GM13977 (cell line): ENCODE measurements at regions of chr20 and their contacts with region 1.

Region 1: GRCh38 chr20:31508517-31509244 is 5.6 kb upstream of the HM13 start:
- DNase-seq: no peak
- CTCF ChIP-seq: no peak

Region 2: DNA sequence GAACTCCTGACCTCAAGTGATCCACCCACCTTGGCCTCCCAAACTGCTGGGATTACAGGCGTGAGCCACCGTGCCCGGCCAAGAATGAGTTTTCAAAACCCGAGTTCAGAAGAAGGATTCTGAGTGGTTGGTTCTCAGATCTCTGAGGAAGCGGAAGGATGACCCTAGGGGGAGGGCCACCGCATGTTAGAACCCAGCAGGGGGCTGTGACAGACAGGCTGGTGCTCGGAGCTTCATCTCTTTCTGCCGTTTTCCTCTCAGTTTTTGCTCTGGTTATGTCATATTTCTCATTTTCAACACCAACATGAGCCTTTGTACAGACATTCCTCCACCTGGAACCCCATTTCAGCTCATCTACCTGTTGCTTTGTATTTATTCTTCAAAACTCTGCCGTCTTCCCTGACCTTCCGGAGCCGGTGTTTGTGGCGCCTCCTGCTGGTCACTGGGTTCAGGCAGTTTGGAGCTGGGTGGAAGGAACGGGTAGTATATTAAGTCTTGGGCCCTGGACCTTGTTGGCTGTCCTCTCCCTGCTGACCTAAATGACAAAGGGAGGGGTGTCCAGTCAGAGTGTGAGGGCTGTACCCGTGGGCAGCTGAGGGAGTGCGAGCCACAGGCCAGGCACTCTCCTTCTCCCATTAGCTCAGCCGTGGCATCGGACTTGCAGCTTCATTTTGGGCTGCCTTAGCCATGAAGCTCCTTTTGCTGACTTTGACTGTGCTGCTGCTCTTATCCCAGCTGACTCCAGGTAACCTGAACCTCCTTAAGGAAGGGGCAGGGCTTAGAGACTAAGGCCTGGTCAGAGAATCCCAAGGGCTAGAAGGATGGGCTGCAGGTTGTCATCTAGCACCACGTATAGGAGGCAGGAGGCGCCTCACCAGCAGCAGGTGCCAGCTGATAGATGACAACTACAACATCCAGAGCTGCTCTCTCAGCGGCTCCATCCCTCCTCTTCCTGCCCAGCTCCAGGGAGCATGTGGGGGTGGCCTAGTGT is 68.4 kb before region 1 on chr20 and contains the start of gene DEFB123:
- in situ Hi-C with region 1: no loop called
- DNase-seq: no peak
- CTCF ChIP-seq: peak; percentile 40

Region 3: DNA sequence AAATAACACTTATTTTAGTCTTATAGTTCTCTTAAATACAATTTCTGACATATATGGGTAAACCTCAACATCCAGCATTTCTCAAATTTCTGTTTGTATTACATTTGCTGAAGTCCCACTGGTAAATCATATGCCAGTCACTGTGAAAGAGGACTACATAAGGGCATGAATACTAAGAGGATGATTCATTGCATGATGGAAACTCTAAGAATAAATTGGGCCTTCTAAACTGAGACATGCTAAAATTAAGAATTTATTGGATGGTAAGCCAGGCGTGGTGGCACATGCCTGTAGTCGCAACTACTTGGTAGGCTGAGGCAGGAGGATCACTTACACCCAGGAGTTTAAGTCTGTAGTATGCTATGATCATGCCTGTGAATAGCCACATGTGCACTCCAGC is 56.1 kb before region 1 on chr20:
- in situ Hi-C with region 1: loop called (anchors 10 kb)
- DNase-seq: no peak
- CTCF ChIP-seq: no peak